PC-9 (cell line): ENCODE measurements at regions of chr19 and their contacts with region 1.

Region 1: DNA sequence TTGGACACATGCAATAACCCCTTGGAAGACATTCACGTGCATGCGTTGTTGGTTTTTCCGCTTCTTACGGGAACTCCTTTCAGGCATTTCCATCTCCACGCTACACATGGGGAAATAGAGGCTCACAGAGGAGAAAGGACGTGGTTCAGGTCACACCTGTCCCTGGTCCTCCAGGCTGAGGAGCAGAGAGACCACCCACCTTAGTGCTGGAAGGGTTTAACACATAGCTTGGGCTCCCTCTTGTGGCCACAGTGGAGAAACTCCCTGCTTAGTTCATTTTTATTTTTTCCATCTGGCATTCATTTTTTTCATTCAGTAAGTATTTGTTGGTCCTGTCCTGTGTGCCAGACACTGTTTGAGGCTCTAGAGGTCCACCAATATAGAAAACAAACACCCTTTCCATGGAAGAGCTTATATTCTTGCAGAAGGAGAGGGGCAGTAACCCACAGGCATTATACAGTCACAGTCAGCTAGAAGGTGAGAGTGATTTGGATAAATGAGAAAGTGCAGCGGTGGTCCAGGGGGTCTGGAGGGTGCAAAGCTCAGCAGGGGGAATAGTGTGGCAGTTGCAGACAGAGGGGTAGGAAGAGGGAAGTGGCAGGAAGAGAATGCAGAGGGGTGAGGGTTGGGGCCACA is 24.2 kb upstream of the TTYH1 start:
- DNase-seq: peak; percentile 50
- H3K4me3 ChIP-seq: no peak overlapping the region
- H3K27ac ChIP-seq: no peak overlapping the region
- H3K4me1 ChIP-seq: no peaks in the 10 kb centered on the region
- H3K27me3 ChIP-seq: peaks cover 59% of the 10 kb centered on the region
- CTCF ChIP-seq: peak; percentile 96

Region 2: DNA sequence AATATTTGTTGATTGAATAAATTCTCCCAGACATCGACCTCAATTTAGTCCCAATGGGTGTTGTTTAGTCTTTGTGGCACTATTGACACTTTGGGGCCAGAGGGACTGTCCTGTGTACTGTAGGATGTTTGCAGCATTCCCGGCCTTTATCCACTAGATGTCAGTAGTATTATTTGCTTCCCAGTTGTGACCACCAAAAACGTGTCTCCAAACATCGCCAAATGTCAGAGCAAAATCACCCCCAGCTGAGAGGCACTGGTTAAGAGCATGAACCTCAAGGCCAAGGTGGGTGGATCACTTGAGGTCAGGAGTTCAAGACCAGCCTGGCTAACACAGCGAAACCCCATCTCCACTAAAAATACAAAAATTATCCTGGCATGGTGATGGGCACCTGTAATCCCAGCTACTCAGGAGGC is 582.3 kb before region 1 on chr19:
- CTCF ChIA-PET with region 1: interaction called, 4 read pairs
- POLR2A ChIA-PET with region 1: no interaction called
- intact Hi-C with region 1: loop called (anchors 5 kb)
- DNase-seq: peak; percentile 29 to 44
- H3K4me3 ChIP-seq: no peak overlapping the region
- H3K27ac ChIP-seq: no peak overlapping the region
- H3K4me1 ChIP-seq: no peaks in the 10 kb centered on the region
- H3K27me3 ChIP-seq: no peaks in the 10 kb centered on the region
- CTCF ChIP-seq: peak; percentile 76

Region 3: GRCh38 chr19:54297760-54298305 is 93.2 kb before region 1 on chr19:
- CTCF ChIA-PET with region 1: no interaction called
- POLR2A ChIA-PET with region 1: no interaction called
- intact Hi-C with region 1: no loop called
- DNase-seq: no peak
- H3K4me3 ChIP-seq: no peak overlapping the region
- H3K27ac ChIP-seq: no peak overlapping the region
- H3K4me1 ChIP-seq: no peaks in the 10 kb centered on the region
- H3K27me3 ChIP-seq: peaks cover 93% of the 10 kb centered on the region
- CTCF ChIP-seq: no peak; the same call in 1 of the 2 replicates

Region 4: DNA sequence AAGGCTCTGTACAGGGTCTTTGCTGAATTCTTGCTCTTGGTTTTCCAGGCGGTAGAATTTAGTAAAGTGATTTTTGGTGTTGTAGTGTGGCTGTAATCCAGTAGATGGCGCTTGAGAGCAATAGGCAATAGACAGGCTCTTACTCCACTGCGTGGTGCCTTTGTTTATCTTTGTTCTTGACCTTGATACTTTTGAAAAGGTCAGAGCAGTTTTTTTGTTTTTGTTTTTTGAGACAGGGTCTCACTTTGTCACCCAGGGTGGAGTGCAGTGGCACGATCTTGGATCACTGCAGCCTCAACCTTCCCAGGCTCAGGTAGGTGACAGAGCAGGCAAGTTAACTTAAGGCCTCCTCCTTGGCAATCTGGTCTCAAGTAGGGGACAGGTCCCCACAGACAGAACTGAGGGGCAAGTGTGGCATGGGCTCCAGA is 65.9 kb before region 1 on chr19:
- CTCF ChIA-PET with region 1: interaction called, 4 read pairs
- POLR2A ChIA-PET with region 1: no interaction called
- intact Hi-C with region 1: loop called (anchors 2 kb)
- DNase-seq: peak in 1 of 2 experiments; percentile 31
- H3K4me3 ChIP-seq: no peak overlapping the region
- H3K27ac ChIP-seq: no peak overlapping the region
- H3K4me1 ChIP-seq: no peaks in the 10 kb centered on the region
- H3K27me3 ChIP-seq: peaks cover 67% of the 10 kb centered on the region
- CTCF ChIP-seq: peak; percentile 93